ENCODE measurements at regions of chr9 and their contacts with region 1.

Region 1: GRCh38 chr9:10168241-10168640 is 444.6 kb downstream of the PTPRD start:
- DNase-seq: no peak
- ATAC-seq: no peak
- H3K4me3 ChIP-seq: no peak overlapping the region
- H3K27ac ChIP-seq: no peak overlapping the region
- H3K4me1 ChIP-seq: no peaks in the 10 kb centered on the region
- H3K27me3 ChIP-seq: no peaks in the 10 kb centered on the region
- CTCF ChIP-seq: no peak

Region 2: GRCh38 chr9:10228082-10228481 is 59.8 kb after region 1 on chr9:
- intact Hi-C with region 1: loop called in 1 of 2 experiments (anchors 10 kb)
- DNase-seq: no peak
- ATAC-seq: no peak
- H3K4me3 ChIP-seq: no peak overlapping the region
- H3K27ac ChIP-seq: no peak overlapping the region
- H3K4me1 ChIP-seq: no peaks in the 10 kb centered on the region
- H3K27me3 ChIP-seq: no peaks in the 10 kb centered on the region
- CTCF ChIP-seq: no peak

Measured in psoas muscle (tissue), 8 donors.